Body of pancreas (tissue), 4 donors: ENCODE measurements at regions of chr3 and their contacts with region 1.

Region 1: DNA sequence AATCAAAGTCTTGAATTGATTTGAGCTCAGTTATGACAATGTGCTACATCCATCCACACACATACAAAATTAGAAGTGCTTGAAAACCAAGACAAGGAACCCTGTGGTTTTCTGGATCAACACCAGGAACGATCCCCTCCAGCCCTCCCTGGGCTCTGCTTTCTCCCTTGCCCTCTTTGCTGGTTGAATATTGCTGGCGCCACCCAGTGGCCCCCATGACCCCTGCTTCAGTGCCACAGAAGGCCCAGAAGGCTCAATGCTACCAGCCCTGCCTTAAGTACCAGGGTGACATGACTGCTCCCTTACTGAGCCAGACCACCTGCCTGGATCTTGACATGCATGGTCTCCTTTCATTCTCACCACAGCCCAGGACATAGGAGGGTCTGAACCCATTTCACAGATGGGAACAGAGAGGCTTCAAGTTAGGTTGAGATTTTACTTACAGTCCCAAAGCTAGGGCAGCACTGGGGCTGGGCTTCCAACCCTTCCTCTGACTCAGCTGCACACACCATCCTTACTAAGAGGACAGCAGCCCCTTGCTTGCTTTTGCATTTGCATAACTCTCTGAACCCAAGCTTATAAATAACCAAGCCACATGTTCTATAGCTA is 15.0 kb downstream of the IL12A start:
- DNase-seq: peak; percentile 31 to 59 (median 41)
- ATAC-seq: peak; percentile 50
- H3K4me3 ChIP-seq: no peak overlapping the region
- H3K27ac ChIP-seq: no peak overlapping the region
- H3K4me1 ChIP-seq: no peaks in the 10 kb centered on the region
- H3K27me3 ChIP-seq: no peaks in the 10 kb centered on the region
- CTCF ChIP-seq: peak; percentile 24 to 52 (median 38)
- POLR2A ChIP-seq: no peak

Region 2: GRCh38 chr3:159884661-159885402 is 118.8 kb before region 1 on chr3:
- intact Hi-C with region 1: loop called (anchors 10 kb)
- DNase-seq: no peak
- ATAC-seq: no peak
- H3K4me3 ChIP-seq: no peak overlapping the region
- H3K27ac ChIP-seq: no peak overlapping the region
- H3K4me1 ChIP-seq: no peaks in the 10 kb centered on the region
- H3K27me3 ChIP-seq: no peaks in the 10 kb centered on the region
- CTCF ChIP-seq: peak in 6 of 7 experiments; percentile 39 to 60 (median 58)
- POLR2A ChIP-seq: no peak

Region 3: GRCh38 chr3:160163229-160163878 is 159.7 kb after region 1 on chr3:
- intact Hi-C with region 1: no loop called
- DNase-seq: peak in 1 of 4 donors; percentile 11
- ATAC-seq: no peak
- H3K4me3 ChIP-seq: no peak overlapping the region
- H3K27ac ChIP-seq: no peak overlapping the region
- H3K4me1 ChIP-seq: no peaks in the 10 kb centered on the region
- H3K27me3 ChIP-seq: no peaks in the 10 kb centered on the region
- CTCF ChIP-seq: peak in 6 of 7 experiments; percentile 26 to 58 (median 54)
- POLR2A ChIP-seq: no peak